Dorsolateral prefrontal cortex (tissue), 120 donors: ENCODE measurements at regions of chr9 and their contacts with region 1.

Region 1: DNA sequence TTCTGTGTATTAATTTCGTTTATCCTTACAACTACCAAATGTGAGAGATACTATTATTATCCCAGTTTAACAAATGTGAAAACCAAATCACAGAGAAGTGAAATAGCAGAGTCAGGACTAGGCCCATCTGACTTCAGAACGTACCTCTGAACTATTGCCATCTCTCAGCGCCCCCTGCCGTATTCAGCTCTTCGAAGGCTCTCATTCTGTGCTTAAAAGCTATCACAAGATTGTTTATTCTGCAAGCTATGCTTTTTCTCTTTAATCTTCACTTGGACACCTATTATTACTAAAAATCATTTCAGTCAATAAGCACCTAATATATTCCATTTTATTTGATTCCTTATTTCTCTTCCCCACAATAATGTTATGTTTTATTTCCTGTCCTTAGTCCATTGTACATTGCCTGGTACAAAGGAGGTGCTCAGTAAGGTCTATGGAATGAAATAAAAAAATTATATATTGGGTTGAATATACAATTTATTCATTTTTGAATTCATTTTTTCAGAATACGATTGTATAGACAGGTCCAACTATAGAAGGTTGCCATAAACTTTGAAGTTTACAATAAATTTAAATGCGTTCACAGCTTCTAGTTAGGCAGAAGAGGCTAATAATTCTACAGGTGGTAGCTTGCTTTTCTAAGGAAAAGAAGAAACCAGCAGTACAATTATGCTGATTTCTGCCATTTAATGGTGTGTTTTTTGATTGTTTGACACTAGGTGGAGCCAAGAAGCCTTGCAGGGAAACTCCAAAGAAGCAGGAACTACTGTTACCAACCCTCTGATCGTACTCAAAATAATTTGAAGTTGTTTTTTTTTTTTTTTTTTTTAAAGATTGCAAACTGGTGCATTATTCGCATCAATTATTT is 202.2 kb upstream of the DMRTA1 start:
- DNase-seq: no peak
- H3K4me3 ChIP-seq: peak overlapping the region in 25 of 59 donors; percentile 1 to 41 (median 22)
- H3K27ac ChIP-seq: no peak overlapping the region
- H3K27me3 ChIP-seq: no peaks in the 10 kb centered on the region
- CTCF ChIP-seq: peak in 55 of 56 donors; percentile 26 to 70 (median 50)

Region 2: DNA sequence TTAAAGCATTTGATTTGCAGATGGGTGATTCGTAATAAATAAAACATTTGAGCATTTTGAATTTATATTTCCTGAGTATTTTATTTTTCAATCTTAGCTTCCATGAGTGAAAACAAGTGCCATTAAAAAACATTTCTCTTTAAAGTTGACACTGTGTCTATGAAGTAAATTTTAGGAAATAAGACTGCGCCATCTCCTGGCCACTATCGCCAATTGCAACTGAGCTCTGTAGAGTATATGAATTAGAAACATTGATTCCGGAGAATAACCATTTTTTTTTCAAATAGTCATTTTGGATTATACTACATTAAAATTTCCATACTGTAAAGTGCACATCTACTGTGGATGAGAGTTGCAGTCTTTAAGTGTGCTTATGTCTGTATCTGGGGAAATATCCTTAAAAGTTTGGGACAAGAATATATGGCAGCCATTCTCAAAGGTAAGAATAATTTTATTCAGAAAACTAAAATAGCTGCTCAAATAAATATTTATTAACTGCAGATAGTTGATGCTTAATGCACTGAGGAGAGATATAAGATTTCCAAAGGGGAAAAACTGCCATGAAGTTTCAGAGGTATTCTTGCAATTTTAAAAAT is 208.1 kb after region 1 on chr9:
- intact Hi-C with region 1: loop called in 1 of 2 experiments (anchors 10 kb)
- DNase-seq: peak in 6 of 10 donors; percentile 12 to 65 (median 50)
- H3K4me3 ChIP-seq: no peak overlapping the region
- H3K27ac ChIP-seq: no peak overlapping the region
- H3K27me3 ChIP-seq: peaks cover 0 to 28% (median 0%) of the 10 kb centered on the region in 45 donors
- CTCF ChIP-seq: peak; percentile 66 to 92 (median 79)